Activated CD8-positive, alpha-beta T cell treated with anti-CD3 and anti-CD28 coated beads, Interleukin-2, amount 10 ng/mL, durations not matched to agents 7 days and 5 days (primary cell): ENCODE measurements at regions of chr19 and their contacts with region 1.

Region 1: GRCh38 chr19:23395041-23395721 is at the start of gene ZNF91:
- DNase-seq: peak; percentile 96
- ATAC-seq: peak; percentile 98
- H3K4me3 Mint-ChIP-seq: peak within 1 kb of the TSS; percentile 97
- H3K27ac Mint-ChIP-seq: peak within 1 kb of the TSS; percentile 98
- H3K4me1 Mint-ChIP-seq: peaks cover 15% of the 10 kb centered on the region
- H3K27me3 Mint-ChIP-seq: no peaks in the 10 kb centered on the region
- total RNA-seq, gene ZNF91: 32.0 to 35.8 TPM

Region 2: DNA sequence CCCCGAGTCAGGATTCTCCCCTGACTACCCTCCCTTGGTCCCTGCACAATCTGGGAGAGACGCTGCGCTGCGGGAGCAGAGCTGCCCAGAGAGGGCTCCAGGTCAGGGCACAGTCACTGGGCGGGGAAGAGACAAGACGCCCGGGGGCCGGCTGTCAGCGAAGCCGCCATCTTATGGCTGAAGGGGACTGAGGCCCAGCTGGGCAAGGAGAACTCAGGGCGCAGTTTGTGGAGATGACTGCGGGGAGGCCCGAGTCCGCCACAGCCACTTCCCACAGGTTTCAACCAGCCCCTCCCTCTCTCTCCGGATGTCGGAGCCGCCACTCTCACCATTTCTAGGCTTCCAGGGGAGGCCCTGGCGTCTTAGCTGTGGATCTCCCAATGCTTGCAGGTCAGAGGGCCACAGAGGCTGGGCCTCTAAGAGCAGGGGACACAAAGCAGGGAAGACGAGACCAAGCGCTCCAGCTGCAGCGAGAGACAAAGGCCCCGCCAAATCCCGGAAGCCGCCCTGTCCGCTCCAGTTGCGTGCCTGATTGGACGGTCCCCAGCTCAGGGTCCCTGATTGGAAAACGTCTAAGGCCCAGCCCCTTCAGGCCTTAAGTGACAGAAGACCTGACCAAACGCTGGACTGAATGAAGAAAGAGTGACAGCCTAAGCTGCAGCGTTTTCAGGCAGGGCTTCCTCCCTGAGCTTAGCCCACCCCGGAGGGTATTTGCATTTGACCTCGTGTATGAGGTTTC is 145.1 kb before region 1 on chr19 and contains the start of gene ZNF724:
- CTCF ChIA-PET with region 1: no interaction called
- POLR2A ChIA-PET with region 1: interaction called, 14 read pairs
- DNase-seq: peak; percentile 96
- ATAC-seq: peak; percentile 99
- H3K4me3 Mint-ChIP-seq: peak within 1 kb of the TSS; percentile 98
- H3K27ac Mint-ChIP-seq: peak within 1 kb of the TSS; percentile 98
- H3K4me1 Mint-ChIP-seq: peaks cover 13% of the 10 kb centered on the region
- H3K27me3 Mint-ChIP-seq: no peaks in the 10 kb centered on the region
- total RNA-seq, gene ZNF724: 16.1 to 17.4 TPM

Region 3: DNA sequence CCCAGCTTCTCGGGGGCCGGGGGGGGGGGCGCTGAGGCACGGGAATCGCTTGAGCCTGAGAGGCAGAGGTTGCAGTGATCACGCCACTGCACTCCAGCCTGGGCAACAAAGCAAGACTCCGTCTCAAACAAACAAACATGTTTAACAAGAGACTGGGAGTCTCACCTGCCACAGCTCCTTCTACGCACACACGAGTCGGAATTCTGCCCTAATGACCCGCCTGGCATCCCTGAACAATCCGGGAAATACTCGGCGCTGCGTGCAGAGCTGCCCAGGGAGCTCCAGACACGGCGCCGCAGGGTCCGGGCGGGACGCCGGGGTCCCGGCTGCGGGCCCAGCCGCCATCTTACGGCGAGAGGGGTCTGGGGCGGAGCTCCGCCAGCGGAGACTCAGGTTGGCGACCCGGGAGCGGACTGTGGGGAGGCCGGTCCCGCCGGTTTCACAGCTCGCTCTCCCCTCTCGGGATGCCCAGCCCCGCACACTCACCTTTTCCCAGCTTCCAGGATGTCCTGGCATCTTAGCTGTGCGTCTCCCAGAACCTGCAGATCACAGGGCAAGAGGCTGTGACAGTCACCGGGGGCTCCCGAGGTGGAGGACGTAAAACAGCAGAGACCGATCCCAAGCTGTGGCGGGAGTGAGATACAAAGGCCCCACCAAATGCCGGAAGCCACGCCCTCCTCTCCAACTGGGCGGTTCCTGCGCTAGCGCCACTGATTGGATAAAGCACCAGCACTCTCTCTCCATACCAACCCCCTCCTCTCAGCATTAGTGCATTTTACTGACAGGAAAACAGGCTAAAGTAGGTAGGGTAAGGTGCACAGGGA is 121.4 kb before region 1 on chr19:
- CTCF ChIA-PET with region 1: interaction called, 3 read pairs
- POLR2A ChIA-PET with region 1: interaction called, 30 read pairs
- DNase-seq: peak; percentile 96
- ATAC-seq: peak; percentile 99
- H3K4me3 Mint-ChIP-seq: peak overlapping the region; percentile 95
- H3K27ac Mint-ChIP-seq: peak overlapping the region; percentile 95
- H3K4me1 Mint-ChIP-seq: peaks cover 28% of the 10 kb centered on the region
- H3K27me3 Mint-ChIP-seq: no peaks in the 10 kb centered on the region

Region 4: GRCh38 chr19:23305555-23305954 is 89.6 kb before region 1 on chr19:
- CTCF ChIA-PET with region 1: no interaction called
- POLR2A ChIA-PET with region 1: no interaction called
- DNase-seq: no peak
- ATAC-seq: no peak
- H3K4me3 Mint-ChIP-seq: no peak overlapping the region
- H3K27ac Mint-ChIP-seq: no peak overlapping the region
- H3K4me1 Mint-ChIP-seq: no peaks in the 10 kb centered on the region
- H3K27me3 Mint-ChIP-seq: no peaks in the 10 kb centered on the region

Region 5: DNA sequence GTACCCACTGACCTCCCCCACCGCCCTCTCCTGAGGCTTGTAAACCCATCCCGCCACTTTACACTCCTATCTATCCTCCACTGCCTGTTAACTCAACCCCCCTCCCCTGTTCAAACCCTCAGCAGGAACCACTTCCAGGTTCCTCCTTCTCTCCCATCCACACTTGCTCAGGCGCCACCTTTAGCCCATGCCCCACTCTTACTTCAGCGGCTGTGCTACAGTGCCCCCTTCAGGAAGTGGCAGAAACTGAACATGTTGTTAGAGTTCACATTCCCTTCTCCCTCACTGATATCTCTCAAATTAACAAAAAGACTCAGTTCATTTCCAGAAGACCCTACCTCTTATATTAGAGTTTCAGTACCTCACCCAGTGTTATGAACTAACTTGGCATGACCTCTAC is 49.3 kb before region 1 on chr19:
- CTCF ChIA-PET with region 1: no interaction called
- POLR2A ChIA-PET with region 1: no interaction called
- DNase-seq: no peak
- ATAC-seq: no peak
- H3K4me3 Mint-ChIP-seq: no peak overlapping the region
- H3K27ac Mint-ChIP-seq: no peak overlapping the region
- H3K4me1 Mint-ChIP-seq: no peaks in the 10 kb centered on the region
- H3K27me3 Mint-ChIP-seq: no peaks in the 10 kb centered on the region

Region 6: GRCh38 chr19:23527797-23528196 is 132.6 kb after region 1 on chr19:
- CTCF ChIA-PET with region 1: no interaction called
- POLR2A ChIA-PET with region 1: no interaction called
- DNase-seq: no peak
- ATAC-seq: no peak
- H3K4me3 Mint-ChIP-seq: no peak overlapping the region
- H3K27ac Mint-ChIP-seq: no peak overlapping the region
- H3K4me1 Mint-ChIP-seq: no peaks in the 10 kb centered on the region
- H3K27me3 Mint-ChIP-seq: no peaks in the 10 kb centered on the region

Region 7: GRCh38 chr19:23686621-23687423 is 291.6 kb after region 1 on chr19 and contains the start of gene ZNF675:
- CTCF ChIA-PET with region 1: no interaction called
- POLR2A ChIA-PET with region 1: interaction called, 12 read pairs
- DNase-seq: peak; percentile 94
- ATAC-seq: peak; percentile 96
- H3K4me3 Mint-ChIP-seq: peak within 1 kb of the TSS; percentile 99
- H3K27ac Mint-ChIP-seq: peak within 1 kb of the TSS; percentile 99
- H3K4me1 Mint-ChIP-seq: peaks cover 28% of the 10 kb centered on the region
- H3K27me3 Mint-ChIP-seq: no peaks in the 10 kb centered on the region
- total RNA-seq, gene ZNF675: 23.0 to 23.6 TPM

Region 8: GRCh38 chr19:23758187-23759074 is 363.2 kb after region 1 on chr19 and contains the start of gene ZNF681:
- CTCF ChIA-PET with region 1: no interaction called
- POLR2A ChIA-PET with region 1: interaction called, 15 read pairs
- DNase-seq: peak; percentile 94
- ATAC-seq: peak; percentile 93
- H3K4me3 Mint-ChIP-seq: peak within 1 kb of the TSS; percentile 96
- H3K27ac Mint-ChIP-seq: peak within 1 kb of the TSS; percentile 96
- H3K4me1 Mint-ChIP-seq: peaks cover 27% of the 10 kb centered on the region
- H3K27me3 Mint-ChIP-seq: no peaks in the 10 kb centered on the region
- total RNA-seq, gene ZNF681: 5.5 to 7.5 TPM

Region 9: GRCh38 chr19:24086974-24087595 is 691.9 kb after region 1 on chr19 and contains the start of gene ZNF254:
- CTCF ChIA-PET with region 1: no interaction called
- POLR2A ChIA-PET with region 1: interaction called, 12 read pairs
- DNase-seq: peak; percentile 94
- ATAC-seq: peak; percentile 100
- H3K4me3 Mint-ChIP-seq: peak within 1 kb of the TSS; percentile 97
- H3K27ac Mint-ChIP-seq: peak within 1 kb of the TSS; percentile 99
- H3K4me1 Mint-ChIP-seq: peaks cover 5% of the 10 kb centered on the region
- H3K27me3 Mint-ChIP-seq: no peaks in the 10 kb centered on the region
- total RNA-seq, gene ZNF254: 13.0 to 13.1 TPM